Psoas muscle (tissue), 8 donors: ENCODE measurements at regions of chrX and their contacts with region 1.

Region 1: DNA sequence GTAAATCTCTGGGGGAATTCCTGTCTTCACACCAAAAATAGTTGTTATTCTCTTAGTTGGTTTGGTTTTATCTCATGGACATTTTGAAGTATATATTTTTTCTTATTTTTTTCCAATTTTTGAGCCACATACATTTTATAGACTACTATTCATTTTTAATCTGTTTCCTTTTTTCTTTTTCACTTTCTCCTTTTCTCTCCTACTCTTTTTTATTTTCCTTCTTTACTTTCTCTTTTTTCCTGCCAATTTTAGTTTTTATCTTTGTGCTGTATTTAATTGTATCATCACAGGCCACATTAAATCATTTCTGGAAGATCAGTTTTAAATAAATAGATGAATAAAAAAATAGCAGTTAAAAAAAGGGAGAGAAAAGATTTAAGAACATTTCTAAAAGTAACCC is 14.0 kb upstream of the JADE3 start:
- DNase-seq: no peak
- ATAC-seq: no peak
- H3K4me3 ChIP-seq: no peak overlapping the region
- H3K27ac ChIP-seq: no peak overlapping the region
- H3K4me1 ChIP-seq: no peaks in the 10 kb centered on the region
- H3K27me3 ChIP-seq: peaks cover 0 to 27% (median 0%) of the 10 kb centered on the region in 3 donors
- CTCF ChIP-seq: no peak

Region 2: GRCh38 chrX:46770000-46770816 is 128.0 kb before region 1 on chrX:
- intact Hi-C with region 1: loop called in 1 of 2 experiments (anchors 10 kb)
- DNase-seq: no peak
- ATAC-seq: no peak
- H3K4me3 ChIP-seq: no peak overlapping the region
- H3K27ac ChIP-seq: no peak overlapping the region
- H3K4me1 ChIP-seq: no peaks in the 10 kb centered on the region
- H3K27me3 ChIP-seq: peaks cover 0 to 4% (median 0%) of the 10 kb centered on the region in 3 donors
- CTCF ChIP-seq: no peak